A549 (cell line): ENCODE measurements at regions of chr14 and their contacts with region 1.

Region 1: DNA sequence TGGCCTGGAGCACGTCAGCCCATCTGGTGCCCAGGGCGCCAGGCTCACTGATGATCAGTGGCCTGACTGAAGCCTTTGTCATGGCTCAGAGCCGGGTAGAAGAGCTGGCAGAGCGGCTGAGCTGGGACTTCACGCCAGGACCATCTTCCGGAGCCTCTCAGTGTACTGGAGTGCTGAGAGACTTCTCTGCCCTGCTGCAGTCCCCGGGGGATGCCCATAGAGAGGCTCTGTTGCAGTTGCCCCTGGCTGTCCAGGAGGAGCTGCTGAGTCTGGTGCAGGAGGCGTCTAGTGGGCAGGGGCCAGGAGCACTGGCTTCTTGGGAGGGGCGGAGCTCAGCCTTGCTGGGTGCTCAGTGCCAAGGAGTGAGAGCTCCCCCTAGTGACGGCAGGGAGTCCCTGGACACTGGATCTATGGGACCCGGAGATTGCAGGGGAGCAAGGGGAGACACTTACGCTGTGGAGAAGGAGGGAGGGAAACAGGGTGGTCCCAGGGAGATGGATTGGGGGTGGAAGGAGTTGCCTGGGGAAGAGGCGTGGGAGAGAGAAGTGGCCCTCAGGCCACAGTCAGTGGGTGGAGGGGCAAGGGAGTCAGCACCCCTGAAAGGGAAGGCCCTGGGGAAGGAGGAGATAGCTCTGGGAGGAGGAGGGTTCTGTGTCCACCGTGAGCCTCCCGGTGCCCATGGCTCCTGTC is 2.0 kb downstream of the KHNYN start:
- DNase-seq: peak; percentile 93 to 95
- ATAC-seq: peak; percentile 72 to 87
- H3K4me3 ChIP-seq: peak overlapping the region; percentile 86; the same call in 2 of the 3 replicates
- H3K27ac ChIP-seq: peak overlapping the region; percentile 97 to 99; a peak in 5 of 6 replicates
- H3K4me1 ChIP-seq: peaks cover 14% of the 10 kb centered on the region
- CTCF ChIP-seq: peak; percentile 90
- EP300 ChIP-seq: no peak
- POLR2A ChIP-seq: no peak
- RAD21 ChIP-seq: peak; percentile 88 to 93

Region 2: DNA sequence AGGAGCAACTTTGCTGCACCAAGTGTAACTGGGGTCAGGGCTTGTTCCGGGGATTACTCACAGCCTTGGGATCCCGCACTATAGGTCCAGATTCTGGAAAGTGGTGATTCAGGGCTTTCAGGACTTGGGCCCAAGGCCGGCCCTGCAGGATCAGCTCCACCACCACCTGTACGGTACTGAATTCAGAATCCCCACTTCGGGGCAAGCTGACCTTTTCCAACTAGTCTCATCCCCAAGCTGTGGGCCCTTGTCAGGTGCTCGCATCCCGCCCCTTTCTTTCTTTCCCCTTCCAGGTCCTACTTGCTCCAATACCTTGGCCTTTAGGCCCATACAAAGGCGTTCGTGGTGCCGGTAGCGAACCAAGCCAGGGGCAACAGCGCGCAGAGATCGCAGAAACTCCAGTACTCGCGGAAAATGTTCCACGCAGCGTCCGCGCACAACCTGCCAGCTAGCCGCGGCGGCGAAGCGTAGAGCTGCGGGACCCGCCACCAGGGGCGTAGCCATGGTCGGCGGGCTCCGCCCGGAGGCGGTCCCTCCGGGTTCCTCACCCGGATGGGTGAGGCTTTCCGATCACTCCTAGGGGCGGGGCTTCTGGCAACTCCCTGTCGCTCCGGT is 189.8 kb before region 1 on chr14:
- CTCF ChIA-PET with region 1: interaction called, 19 read pairs
- POLR2A ChIA-PET with region 1: interaction called, 16 read pairs
- DNase-seq: peak in 1 of 2 experiments; percentile 97
- ATAC-seq: peak; percentile 89 to 93
- H3K4me3 ChIP-seq: peak overlapping the region; percentile 64
- H3K27ac ChIP-seq: peak overlapping the region; percentile 89 to 99
- H3K4me1 ChIP-seq: peaks cover 11% of the 10 kb centered on the region
- CTCF ChIP-seq: no peak
- EP300 ChIP-seq: no peak
- POLR2A ChIP-seq: no peak
- RAD21 ChIP-seq: no peak

Region 3: GRCh38 chr14:24321212-24321975 is 110.3 kb before region 1 on chr14:
- CTCF ChIA-PET with region 1: interaction called, 1,142 read pairs
- POLR2A ChIA-PET with region 1: interaction called, 11 read pairs
- DNase-seq: no peak
- ATAC-seq: no peak
- H3K4me3 ChIP-seq: no peak overlapping the region
- H3K27ac ChIP-seq: no peak overlapping the region
- H3K4me1 ChIP-seq: peaks cover 11% of the 10 kb centered on the region
- CTCF ChIP-seq: no peak
- EP300 ChIP-seq: no peak
- POLR2A ChIP-seq: no peak
- RAD21 ChIP-seq: no peak

Region 4: DNA sequence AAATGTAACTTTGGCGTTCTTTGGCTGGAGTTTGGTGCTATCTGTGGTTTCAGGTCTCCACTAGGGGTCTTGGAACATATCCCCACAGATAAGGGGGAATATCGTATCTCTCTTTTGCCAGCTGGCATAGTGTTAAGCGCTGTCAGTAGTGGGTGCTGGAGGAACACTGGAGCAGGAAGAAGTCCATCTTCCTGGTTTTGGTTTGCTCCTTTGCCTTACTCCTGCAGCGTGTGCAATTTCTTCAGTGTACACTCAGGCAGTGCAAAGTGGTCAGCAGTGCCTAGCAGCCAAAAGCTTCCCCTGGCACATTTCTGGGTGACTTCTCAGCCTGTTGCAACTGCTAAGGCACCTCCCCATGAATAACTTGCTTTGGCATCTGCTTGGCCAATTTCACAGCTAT is 80.2 kb before region 1 on chr14:
- CTCF ChIA-PET with region 1: interaction called, 29 read pairs
- POLR2A ChIA-PET with region 1: interaction called, 4 read pairs
- DNase-seq: no peak
- ATAC-seq: peak; percentile 55 to 70; a peak in 4 of 6 replicates
- H3K4me3 ChIP-seq: no peak overlapping the region
- H3K27ac ChIP-seq: no peak overlapping the region
- H3K4me1 ChIP-seq: peaks cover 17% of the 10 kb centered on the region
- CTCF ChIP-seq: no peak
- EP300 ChIP-seq: no peak
- POLR2A ChIP-seq: no peak
- RAD21 ChIP-seq: no peak

Region 5: DNA sequence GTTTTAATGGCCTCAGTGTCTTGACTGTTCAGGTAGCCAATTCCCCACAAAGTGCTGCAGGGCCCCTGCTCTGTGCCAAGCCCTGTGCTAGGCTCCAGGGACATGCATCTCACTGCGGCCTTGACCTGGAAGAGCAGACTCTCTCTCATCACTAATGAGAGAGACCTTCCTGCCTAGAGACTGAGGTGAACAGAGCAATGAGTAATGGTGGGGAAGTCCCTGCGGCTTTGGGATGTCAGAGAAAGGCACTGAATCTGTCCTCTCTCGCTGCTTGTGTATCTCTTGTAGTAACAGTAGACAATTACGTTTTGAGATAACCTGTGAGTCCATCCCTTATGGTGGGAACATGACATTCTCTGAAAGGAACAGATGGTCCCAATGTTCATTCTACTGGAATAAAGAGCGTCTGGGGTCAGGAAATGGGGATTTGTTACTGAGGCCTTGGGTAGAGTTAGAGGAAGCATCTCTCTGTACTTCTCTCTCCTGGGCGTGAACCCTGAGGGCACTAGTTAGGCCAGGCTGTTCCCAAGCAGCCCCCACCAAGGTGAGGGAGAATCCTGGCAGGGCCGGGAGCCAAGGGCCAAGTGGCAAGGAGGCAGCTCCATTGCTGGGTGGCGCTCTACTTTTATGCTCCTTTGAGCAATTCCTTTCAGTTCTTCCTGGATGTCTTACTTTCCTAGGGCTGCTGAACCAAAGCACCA is 50.2 kb before region 1 on chr14:
- CTCF ChIA-PET with region 1: interaction called, 14 read pairs
- POLR2A ChIA-PET with region 1: interaction called, 5 read pairs
- DNase-seq: no peak
- ATAC-seq: no peak
- H3K4me3 ChIP-seq: no peak overlapping the region
- H3K27ac ChIP-seq: no peak overlapping the region
- H3K4me1 ChIP-seq: no peaks in the 10 kb centered on the region
- CTCF ChIP-seq: no peak
- EP300 ChIP-seq: no peak
- POLR2A ChIP-seq: no peak
- RAD21 ChIP-seq: no peak

Region 6: GRCh38 chr14:24411443-24412389 is 20.0 kb before region 1 on chr14:
- CTCF ChIA-PET with region 1: interaction called, 254 read pairs
- POLR2A ChIA-PET with region 1: interaction called, 8 read pairs
- DNase-seq: peak; percentile 66 to 74
- ATAC-seq: peak; percentile 76 to 85
- H3K4me3 ChIP-seq: no peak overlapping the region
- H3K27ac ChIP-seq: no peak overlapping the region
- H3K4me1 ChIP-seq: no peaks in the 10 kb centered on the region
- CTCF ChIP-seq: peak; percentile 53
- EP300 ChIP-seq: no peak
- POLR2A ChIP-seq: no peak
- RAD21 ChIP-seq: peak; percentile 46 to 50